HCT116 (cell line): ENCODE measurements at regions of chr3 and their contacts with region 1.

Region 1: DNA sequence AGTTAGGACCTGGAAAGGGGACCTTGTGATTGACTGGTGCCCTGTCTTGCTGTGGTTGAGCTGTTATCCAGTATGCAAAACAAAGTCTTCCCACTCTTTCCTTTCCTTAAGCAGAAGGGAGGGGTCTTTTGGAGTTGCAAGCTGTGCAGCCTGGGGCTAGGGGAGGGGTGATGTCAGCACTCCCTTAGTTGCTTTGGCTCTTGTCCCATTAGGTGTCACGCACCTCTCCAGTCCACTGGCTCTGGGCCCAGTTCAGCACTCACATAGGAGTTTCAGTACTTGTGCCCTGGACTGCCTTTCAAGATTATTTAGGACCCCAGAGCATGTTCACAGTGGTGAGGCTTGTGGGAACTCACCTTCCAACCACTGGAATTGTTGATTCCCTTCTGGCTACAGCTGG is 238.5 kb downstream of the DOCK3 start:
- DNase-seq: no peak
- ATAC-seq: no peak
- H3K4me3 ChIP-seq: no peak overlapping the region
- H3K27ac ChIP-seq: no peak overlapping the region
- H3K4me1 ChIP-seq: no peaks in the 10 kb centered on the region
- H3K27me3 ChIP-seq: no peaks in the 10 kb centered on the region
- CTCF ChIP-seq: no peak
- POLR2A ChIP-seq: no peak
- RAD21 ChIP-seq: no peak

Region 2: DNA sequence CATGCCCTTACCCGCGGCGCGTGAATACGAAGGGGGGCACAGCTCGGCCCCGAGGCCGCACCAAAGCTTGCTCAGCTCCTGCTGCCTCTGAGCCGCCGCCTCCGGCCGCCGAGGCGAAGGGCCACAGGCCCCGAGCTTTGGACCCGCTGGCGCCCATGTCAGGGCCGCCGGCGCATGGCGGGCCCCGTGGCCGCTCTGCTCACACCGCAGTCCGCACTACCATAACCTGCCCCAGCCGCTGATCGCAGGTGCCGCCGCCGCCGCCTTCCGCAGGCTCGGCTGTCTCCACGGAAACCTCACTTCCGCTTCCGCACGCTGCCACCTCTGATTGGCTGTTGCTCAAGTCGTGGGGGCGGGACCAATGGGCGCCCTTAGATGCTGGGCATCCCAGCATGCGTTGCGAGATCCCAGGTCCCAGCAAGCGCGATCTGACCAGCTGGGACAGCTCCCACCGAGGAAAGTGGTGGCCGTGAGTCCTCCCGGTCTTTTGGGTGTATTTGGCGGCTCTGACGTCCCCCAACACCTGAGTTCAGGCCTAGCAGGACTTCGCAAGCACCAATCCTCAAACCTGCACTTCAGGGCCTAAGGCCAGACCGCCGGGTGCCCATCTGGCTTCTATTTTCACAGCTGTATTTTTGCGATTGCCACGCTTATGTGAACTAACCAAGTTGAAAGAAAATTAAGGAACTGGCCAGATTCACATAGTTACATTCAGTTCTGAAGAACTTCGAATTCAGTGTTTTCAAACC is 585.1 kb before region 1 on chr3 and contains the start of gene TUSC2:
- CTCF ChIA-PET with region 1: no interaction called
- POLR2A ChIA-PET with region 1: no interaction called
- RAD21 ChIA-PET with region 1: no interaction called
- intact Hi-C with region 1: no loop called
- DNase-seq: peak; percentile 93
- ATAC-seq: peak; percentile 82
- H3K4me3 ChIP-seq: peak within 1 kb of the TSS; percentile 87 to 98
- H3K27ac ChIP-seq: peak within 1 kb of the TSS; percentile 61
- H3K4me1 ChIP-seq: peaks cover 11 to 28% of the 10 kb centered on the region in 2 experiments
- H3K27me3 ChIP-seq: no peaks in the 10 kb centered on the region
- CTCF ChIP-seq: no peak
- POLR2A ChIP-seq: no peak
- RAD21 ChIP-seq: no peak
- total RNA-seq, gene TUSC2: 34.0 TPM

Region 3: DNA sequence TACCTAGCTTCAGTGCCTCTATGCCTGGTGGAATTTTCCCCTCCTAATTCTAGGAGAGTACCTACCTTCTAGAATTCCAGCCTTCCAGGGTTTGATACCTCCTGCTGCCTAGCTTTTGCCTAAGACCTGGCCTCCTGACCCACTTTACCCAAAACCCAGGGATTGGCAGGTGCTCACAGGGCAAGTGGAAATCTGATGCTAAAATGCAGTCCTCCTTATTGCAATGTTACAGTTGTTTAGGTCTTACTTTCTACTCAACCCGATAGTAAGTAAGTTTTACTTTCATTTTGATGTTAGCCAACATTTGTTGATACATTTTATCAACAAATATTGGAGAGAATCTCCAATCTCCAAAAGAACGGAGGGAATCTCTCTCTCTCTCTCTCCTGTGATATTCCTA is 37.3 kb after region 1 on chr3:
- CTCF ChIA-PET with region 1: no interaction called
- POLR2A ChIA-PET with region 1: no interaction called
- RAD21 ChIA-PET with region 1: no interaction called
- intact Hi-C with region 1: loop called (anchors 5 kb)
- DNase-seq: no peak
- ATAC-seq: no peak
- H3K4me3 ChIP-seq: no peak overlapping the region
- H3K27ac ChIP-seq: no peak overlapping the region
- H3K4me1 ChIP-seq: no peaks in the 10 kb centered on the region
- H3K27me3 ChIP-seq: no peaks in the 10 kb centered on the region
- CTCF ChIP-seq: no peak
- POLR2A ChIP-seq: no peak
- RAD21 ChIP-seq: no peak

Region 4: DNA sequence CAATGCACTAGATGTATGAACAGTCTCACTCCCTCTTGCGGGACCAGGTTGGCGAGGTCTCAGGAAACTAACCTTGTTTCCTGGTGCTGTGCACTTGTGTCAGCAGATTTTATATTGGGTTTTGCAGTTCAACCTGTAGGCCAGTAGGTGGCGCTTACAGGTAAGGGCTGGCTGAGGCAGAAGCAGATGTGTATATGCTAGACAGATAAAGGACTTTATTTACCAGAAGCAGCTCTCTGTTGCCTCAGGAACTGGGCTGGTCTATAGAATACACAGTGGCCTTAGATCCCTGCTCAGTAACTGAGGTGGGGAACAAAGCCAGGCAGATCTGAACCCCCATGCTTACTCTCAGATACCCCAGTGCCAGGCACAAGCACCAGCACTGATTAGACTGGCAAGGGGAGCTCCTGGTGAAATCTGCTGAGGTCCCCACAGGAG is 58.2 kb after region 1 on chr3:
- CTCF ChIA-PET with region 1: no interaction called
- POLR2A ChIA-PET with region 1: no interaction called
- RAD21 ChIA-PET with region 1: no interaction called
- intact Hi-C with region 1: loop called (anchors 2 kb)
- DNase-seq: peak; percentile 73
- ATAC-seq: peak; percentile 96
- H3K4me3 ChIP-seq: no peak overlapping the region
- H3K27ac ChIP-seq: no peak overlapping the region
- H3K4me1 ChIP-seq: peaks cover 0 to 3% of the 10 kb centered on the region in 2 experiments; a peak in 1 of 4 replicates
- H3K27me3 ChIP-seq: no peaks in the 10 kb centered on the region
- CTCF ChIP-seq: peak; percentile 88 to 99 (median 96)
- POLR2A ChIP-seq: no peak
- RAD21 ChIP-seq: peak; percentile 94